HepG2 (cell line): ENCODE measurements at regions of chr19 and their contacts with region 1.

Region 1: DNA sequence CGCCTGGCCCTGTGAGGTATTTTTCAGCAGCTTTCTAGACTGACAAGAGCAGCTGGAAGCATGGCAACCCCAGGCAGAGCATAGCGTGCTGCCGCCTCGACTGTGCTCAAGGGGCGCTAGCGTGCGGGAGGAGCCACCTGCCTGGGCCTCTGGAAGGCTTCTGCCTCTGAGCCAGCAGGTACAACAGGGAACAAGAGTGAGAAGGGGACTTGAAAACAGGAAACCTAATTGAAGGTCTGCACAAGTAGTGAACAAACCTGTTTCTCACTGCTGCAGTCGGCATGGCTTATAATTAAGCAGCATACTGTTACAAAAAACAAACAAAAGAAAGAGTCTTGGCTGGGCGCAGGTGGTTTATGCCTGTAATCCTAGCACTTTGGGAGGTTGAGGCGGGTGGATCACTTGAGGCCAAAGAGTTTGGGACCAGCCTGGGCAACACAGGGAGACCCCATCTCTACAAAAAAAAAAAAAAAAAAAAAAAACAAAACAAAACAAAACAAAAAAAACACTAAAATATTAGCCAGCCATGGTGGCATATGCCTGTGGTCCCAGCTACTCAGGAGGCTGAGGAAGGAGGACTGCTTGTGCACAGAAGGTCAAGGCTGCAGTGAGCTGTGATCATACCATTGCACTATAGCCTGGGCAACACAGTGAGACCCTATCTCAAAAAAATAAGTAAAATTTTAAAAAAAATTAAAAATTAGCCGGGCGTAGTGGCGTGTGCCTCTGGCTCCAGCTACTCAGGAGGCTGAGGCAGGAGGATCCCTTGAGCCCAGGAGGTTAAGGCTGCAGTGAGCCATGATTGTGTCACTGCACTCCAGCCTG is 12.6 kb upstream of the GARRE1 start:
- DNase-seq: peak; percentile 53
- ATAC-seq: peak; percentile 97
- H3K4me3 ChIP-seq: no peak overlapping the region
- H3K27ac ChIP-seq: no peak overlapping the region
- H3K4me1 ChIP-seq: peaks cover 13% of the 10 kb centered on the region
- H3K27me3 ChIP-seq: no peaks in the 10 kb centered on the region
- CTCF ChIP-seq: peak; percentile 78
- EP300 ChIP-seq: no peak
- POLR2A ChIP-seq: no peak
- RAD21 ChIP-seq: peak; percentile 78

Region 2: GRCh38 chr19:34134190-34135053 is 107.3 kb before region 1 on chr19:
- CTCF ChIA-PET with region 1: no interaction called
- POLR2A ChIA-PET with region 1: no interaction called
- in situ Hi-C with region 1: no loop called
- intact Hi-C with region 1: no loop called
- DNase-seq: peak; percentile 70
- ATAC-seq: peak; percentile 94
- H3K4me3 ChIP-seq: peak overlapping the region; percentile 63 to 78 (median 66)
- H3K27ac ChIP-seq: peak overlapping the region; percentile 59
- H3K4me1 ChIP-seq: peaks cover 13% of the 10 kb centered on the region
- H3K27me3 ChIP-seq: no peaks in the 10 kb centered on the region
- CTCF ChIP-seq: no peak
- EP300 ChIP-seq: no peak
- POLR2A ChIP-seq: peak; percentile 85 to 97
- RAD21 ChIP-seq: no peak

Region 3: DNA sequence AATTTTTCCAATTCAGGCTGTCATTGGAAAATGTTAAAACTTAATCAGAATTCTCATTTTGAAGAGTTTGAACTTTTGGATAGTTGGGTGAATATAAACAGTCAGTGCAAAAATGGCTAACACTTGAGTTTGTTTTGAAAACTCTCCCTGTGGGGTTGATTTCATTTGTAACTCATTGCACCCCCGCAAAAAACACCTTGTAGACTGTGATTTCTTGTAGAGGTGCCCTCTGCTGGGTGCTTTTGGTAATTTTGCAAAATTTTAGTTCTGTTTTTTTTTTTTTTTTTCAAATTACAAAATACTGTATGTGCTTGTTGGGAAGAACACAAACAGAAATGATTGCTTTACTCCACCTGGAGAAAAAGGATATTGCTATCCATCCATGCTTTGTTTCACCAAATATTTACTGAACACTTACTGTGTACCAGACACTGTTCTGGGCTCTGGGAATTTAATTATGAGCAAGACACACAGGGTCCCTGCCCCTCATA is 95.1 kb after region 1 on chr19:
- CTCF ChIA-PET with region 1: interaction called, 15 read pairs
- POLR2A ChIA-PET with region 1: no interaction called
- in situ Hi-C with region 1: loop called (anchors 5 kb)
- intact Hi-C with region 1: loop called (anchors 1 kb)
- DNase-seq: no peak
- ATAC-seq: no peak
- H3K4me3 ChIP-seq: no peak overlapping the region
- H3K27ac ChIP-seq: no peak overlapping the region
- H3K4me1 ChIP-seq: peaks cover 18% of the 10 kb centered on the region
- H3K27me3 ChIP-seq: no peaks in the 10 kb centered on the region
- CTCF ChIP-seq: peak; percentile 47
- EP300 ChIP-seq: no peak
- POLR2A ChIP-seq: no peak
- RAD21 ChIP-seq: no peak

Region 4: DNA sequence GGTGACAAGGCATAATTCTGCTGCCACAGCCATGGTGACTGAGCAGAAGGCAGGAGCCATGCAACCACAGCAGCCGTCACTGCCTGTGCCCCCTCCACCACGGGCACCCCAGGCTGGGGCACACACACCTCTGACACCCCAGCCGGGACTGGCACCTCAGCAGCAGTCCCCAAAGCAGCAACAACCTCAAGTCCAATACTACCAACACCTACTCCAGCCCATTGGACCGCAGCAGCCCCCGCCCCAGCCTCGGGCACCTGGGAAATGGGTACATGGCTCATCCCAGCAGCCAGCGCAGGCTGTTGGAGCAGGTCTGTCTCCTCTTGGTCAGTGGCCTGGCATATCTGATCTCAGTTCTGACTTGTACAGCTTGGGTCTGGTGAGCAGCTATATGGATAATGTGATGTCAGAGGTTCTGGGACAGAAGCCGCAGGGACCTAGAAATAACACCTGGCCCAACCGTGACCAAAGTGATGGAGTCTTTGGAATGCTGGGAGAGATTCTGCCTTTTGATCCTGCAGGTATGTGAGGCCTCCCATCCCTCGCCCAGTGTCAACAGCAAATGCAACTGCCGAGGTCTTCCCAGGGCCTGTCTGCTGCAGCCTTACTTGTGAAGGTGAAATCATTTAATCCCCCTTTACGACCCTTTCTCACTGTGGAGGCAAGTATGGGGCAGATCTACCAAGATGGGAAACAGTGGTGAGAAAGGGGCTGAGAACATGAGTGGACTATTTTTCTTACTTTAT is 100.4 kb after region 1 on chr19:
- CTCF ChIA-PET with region 1: interaction called, 15 read pairs
- POLR2A ChIA-PET with region 1: no interaction called
- in situ Hi-C with region 1: loop called (anchors 5 kb)
- intact Hi-C with region 1: no loop called
- DNase-seq: no peak
- ATAC-seq: no peak
- H3K4me3 ChIP-seq: no peak overlapping the region
- H3K27ac ChIP-seq: no peak overlapping the region
- H3K4me1 ChIP-seq: peaks cover 9% of the 10 kb centered on the region; the same call in 1 of the 2 replicates
- H3K27me3 ChIP-seq: no peaks in the 10 kb centered on the region
- CTCF ChIP-seq: no peak
- EP300 ChIP-seq: no peak
- POLR2A ChIP-seq: no peak
- RAD21 ChIP-seq: no peak